Activated B cell treated with CpG ODN at 0.5 μM for 24 hours (primary cell): ENCODE measurements at regions of chr4 and their contacts with region 1.

Region 1: GRCh38 chr4:169492438-169493163 is 119.8 kb downstream of the NEK1 start:
- DNase-seq: no peak
- ATAC-seq: peak; percentile 34
- H3K4me3 Mint-ChIP-seq: no peak overlapping the region
- H3K27ac Mint-ChIP-seq: no peak overlapping the region
- H3K4me1 Mint-ChIP-seq: no peaks in the 10 kb centered on the region
- H3K27me3 Mint-ChIP-seq: no peaks in the 10 kb centered on the region
- CTCF ChIP-seq: no peak

Region 2: DNA sequence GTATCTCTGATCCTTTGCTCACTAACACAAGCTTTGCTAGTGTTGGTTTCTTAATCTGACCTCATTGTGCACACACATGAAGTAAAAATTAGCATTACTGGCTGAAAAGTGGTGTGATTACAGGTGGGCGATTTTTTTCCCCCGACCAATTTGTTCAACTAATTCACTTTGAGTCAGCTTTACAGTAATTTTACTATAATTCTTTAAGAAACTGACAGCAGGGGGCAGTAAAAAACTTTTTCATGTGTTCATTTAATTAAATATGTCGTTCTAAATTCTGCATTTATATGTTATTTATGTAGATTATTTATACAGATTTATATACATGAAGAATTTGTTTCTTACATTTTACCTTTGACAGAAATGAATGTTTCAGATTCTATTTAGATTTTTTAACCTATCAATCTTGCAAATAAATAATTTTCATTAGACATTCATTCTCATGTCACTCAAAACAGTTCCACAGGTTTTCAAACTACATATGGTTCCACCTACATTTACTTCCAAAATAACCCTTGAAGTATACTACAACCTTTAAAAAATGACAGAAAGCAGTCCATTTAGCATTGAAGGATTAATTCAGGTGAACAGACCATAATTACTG is 978.2 kb before region 1 on chr4:
- CTCF ChIA-PET with region 1: no interaction called
- POLR2A ChIA-PET with region 1: no interaction called
- intact Hi-C with region 1: loop called (anchors 1 kb)
- DNase-seq: no peak
- ATAC-seq: no peak
- H3K4me3 Mint-ChIP-seq: no peak overlapping the region
- H3K27ac Mint-ChIP-seq: no peak overlapping the region
- H3K4me1 Mint-ChIP-seq: no peaks in the 10 kb centered on the region
- H3K27me3 Mint-ChIP-seq: peaks cover 2% of the 10 kb centered on the region
- CTCF ChIP-seq: no peak

Region 3: DNA sequence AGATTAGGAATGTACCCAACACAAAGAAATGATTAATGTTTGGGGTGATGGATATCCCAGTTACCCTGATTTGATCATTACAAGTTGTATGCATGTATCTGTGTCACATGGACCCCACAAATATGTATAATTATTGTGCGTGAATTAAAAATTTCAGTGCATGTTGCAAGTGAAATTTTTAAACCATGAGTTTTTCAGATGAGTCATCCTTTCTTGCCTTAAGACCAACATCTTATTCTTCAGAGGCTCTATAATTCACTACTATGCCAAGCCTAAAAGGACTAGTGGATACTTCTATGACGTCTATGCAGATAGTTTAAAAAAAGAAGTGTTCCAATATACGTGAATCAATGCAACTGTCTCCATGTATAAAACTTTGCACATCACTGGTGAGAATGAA is 108.9 kb before region 1 on chr4:
- CTCF ChIA-PET with region 1: no interaction called
- POLR2A ChIA-PET with region 1: no interaction called
- intact Hi-C with region 1: no loop called
- DNase-seq: no peak
- ATAC-seq: no peak
- H3K4me3 Mint-ChIP-seq: no peak overlapping the region
- H3K27ac Mint-ChIP-seq: no peak overlapping the region
- H3K4me1 Mint-ChIP-seq: peaks cover 14% of the 10 kb centered on the region
- H3K27me3 Mint-ChIP-seq: no peaks in the 10 kb centered on the region
- CTCF ChIP-seq: no peak